ENCODE measurements at regions of chr10 and their contacts with region 1.

Region 1: GRCh38 chr10:110746254-110746826 is 102.2 kb downstream of the RBM20 start:
- DNase-seq: peak; percentile 19
- H3K4me3 Mint-ChIP-seq: no peak overlapping the region
- H3K27ac Mint-ChIP-seq: no peak overlapping the region
- H3K4me1 Mint-ChIP-seq: peaks cover 55% of the 10 kb centered on the region
- H3K27me3 Mint-ChIP-seq: no peaks in the 10 kb centered on the region

Region 2: DNA sequence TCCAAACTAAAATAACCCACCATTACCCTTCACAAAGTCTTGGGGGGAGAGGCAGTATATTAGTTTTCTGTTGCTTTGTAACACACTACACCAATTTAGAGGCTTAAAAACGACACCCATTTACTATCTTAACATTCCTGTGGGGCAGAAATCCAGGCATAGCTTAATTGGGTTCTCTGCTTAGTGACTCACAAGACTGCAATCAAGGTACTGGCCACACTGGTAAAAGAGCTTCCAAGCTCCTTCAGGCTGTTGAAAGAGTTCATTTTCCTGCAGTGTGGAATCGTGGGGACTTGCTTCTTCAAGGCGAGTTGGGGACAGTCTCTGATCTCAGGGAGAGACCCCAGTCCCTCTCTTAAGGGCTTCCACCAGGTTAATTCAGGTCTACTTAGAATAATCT is 962.1 kb before region 1 on chr10:
- intact Hi-C with region 1: no loop called
- DNase-seq: no peak
- H3K4me3 Mint-ChIP-seq: no peak overlapping the region
- H3K27ac Mint-ChIP-seq: no peak overlapping the region
- H3K4me1 Mint-ChIP-seq: no peaks in the 10 kb centered on the region
- H3K27me3 Mint-ChIP-seq: peaks cover 3% of the 10 kb centered on the region

Region 3: DNA sequence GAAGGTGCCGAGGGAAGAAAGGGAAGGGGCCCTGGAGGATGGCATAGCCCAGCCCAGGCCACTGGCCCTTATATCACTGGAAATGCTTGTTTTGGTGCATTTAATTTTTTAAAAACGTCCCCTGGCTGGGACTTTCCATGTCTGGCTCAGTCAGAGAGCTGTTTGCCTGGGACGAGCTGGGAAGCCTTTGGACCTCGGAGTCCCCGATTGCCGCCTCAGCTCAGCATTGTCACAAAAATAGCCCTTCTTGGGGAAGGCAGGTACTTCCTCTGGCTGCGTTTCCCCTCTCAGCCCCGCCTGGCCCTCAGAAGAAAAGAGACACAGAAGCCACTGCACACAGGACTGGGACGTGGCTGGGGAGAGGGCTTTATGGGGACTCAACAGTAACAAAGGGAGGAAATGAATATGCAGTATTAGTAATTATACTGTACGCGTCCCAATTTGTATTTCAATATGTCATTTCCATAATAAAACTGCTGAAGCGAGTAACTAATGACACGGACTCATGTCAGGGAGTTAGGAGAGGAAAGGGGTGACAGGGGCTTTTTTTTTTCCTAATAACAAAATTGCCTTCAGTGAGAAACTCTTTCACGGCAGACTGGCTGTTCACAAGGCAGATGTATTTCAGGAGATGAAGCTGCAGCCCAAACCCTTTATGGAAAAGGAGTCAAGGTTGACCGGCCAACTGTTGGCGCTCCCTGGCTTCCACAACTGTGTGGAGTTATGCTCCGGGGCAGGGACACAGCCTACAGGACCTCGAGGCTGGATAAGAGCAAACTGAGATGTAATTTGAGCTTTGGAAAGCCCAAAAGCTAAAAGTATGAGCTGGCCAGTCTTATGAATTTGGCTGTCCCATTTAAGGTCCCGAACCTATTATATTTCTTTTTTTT is 570.0 kb before region 1 on chr10:
- intact Hi-C with region 1: no loop called
- DNase-seq: no peak
- H3K4me3 Mint-ChIP-seq: no peak overlapping the region
- H3K27ac Mint-ChIP-seq: no peak overlapping the region
- H3K4me1 Mint-ChIP-seq: peaks cover 6% of the 10 kb centered on the region
- H3K27me3 Mint-ChIP-seq: peaks cover 47% of the 10 kb centered on the region

Region 4: DNA sequence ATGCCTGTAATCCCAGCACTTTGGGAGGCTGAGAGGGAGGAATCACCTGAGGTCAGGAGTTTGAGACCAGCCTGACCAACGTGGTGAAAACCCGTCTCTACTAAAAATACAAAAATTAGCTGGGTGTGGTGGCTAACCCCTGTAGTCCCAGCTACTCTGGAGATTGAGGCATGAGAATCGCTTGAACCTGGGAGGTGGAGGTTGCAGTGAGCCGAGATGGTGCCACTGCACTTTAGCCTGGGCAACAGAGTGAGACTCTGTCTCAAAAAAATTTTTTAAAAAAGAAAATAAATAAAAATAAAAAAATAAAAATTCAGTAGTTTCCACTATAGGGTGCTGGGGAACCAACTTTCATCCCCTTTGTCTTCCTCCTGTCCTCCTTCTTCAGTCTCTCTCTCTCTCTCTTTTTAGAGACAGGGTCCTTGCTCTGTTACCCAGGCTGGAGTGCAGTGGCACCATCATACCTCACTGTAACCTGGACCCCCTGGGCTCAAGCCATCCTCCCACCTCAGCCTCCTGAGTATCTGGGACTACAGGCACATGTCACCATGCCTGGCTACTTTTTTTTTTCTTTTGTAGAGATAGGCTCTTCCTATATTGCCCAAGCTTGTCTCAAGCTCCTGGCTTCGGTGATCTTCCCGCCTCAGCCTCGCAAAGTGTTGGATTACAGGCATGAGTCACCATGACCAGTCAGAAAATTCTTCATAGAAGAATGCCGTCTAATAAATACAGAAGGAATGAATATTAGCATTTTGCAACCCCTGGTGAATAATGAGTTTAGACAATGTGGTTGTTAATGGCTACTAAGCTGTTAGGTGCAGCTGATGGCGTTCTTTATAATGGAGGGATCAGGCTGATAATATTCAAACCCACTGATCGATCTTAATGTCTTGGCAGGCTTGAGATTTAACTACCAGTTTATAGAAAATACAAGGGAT is 81.6 kb before region 1 on chr10:
- intact Hi-C with region 1: no loop called
- DNase-seq: no peak
- H3K4me3 Mint-ChIP-seq: no peak overlapping the region
- H3K27ac Mint-ChIP-seq: no peak overlapping the region
- H3K4me1 Mint-ChIP-seq: peaks cover 11% of the 10 kb centered on the region
- H3K27me3 Mint-ChIP-seq: peaks cover 32% of the 10 kb centered on the region

Region 5: DNA sequence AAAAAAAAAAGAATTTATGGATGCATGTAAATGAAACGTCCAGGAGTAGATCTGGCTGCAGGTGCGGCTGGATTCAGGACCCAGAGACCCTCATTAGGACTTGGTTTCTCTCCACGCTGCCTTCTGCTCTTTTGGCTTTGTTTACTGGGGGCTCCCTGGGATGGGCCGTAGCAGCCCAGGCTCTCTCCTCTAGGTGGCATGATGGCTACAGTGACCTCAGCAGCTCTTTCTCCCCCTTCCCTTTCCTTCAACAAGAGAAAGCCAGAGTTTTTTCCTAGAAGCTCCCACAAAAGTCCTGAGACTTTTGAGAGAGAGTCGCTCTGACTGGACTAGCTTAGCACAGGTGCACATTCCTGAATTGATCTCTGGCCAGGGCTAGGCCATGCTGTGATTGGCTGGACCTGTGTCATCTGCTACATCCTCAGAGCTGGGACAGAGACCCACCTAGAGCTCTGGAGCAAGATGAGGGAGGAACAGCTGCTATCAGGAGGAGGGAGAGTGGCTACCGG is 57.5 kb after region 1 on chr10:
- intact Hi-C with region 1: loop called (anchors 2 kb)
- DNase-seq: no peak
- H3K4me3 Mint-ChIP-seq: peak overlapping the region; percentile 56
- H3K27ac Mint-ChIP-seq: peak overlapping the region; percentile 51
- H3K4me1 Mint-ChIP-seq: peaks cover 41% of the 10 kb centered on the region
- H3K27me3 Mint-ChIP-seq: no peaks in the 10 kb centered on the region

Region 6: GRCh38 chr10:110871298-110872084 is 125.2 kb after region 1 on chr10 and contains the start of gene PDCD4:
- intact Hi-C with region 1: loop called (anchors 1 kb)
- DNase-seq: peak; percentile 94
- H3K4me3 Mint-ChIP-seq: peak within 1 kb of the TSS; percentile 96
- H3K27ac Mint-ChIP-seq: peak within 1 kb of the TSS; percentile 98
- H3K4me1 Mint-ChIP-seq: peaks cover 74% of the 10 kb centered on the region
- H3K27me3 Mint-ChIP-seq: no peaks in the 10 kb centered on the region
- total RNA-seq, gene PDCD4: 46.1 and 51.8 TPM in 2 replicates

Region 7: GRCh38 chr10:110893559-110894179 is 147.3 kb after region 1 on chr10:
- intact Hi-C with region 1: loop called (anchors 1 kb)
- DNase-seq: no peak
- H3K4me3 Mint-ChIP-seq: no peak overlapping the region
- H3K27ac Mint-ChIP-seq: no peak overlapping the region
- H3K4me1 Mint-ChIP-seq: peaks cover 6% of the 10 kb centered on the region
- H3K27me3 Mint-ChIP-seq: no peaks in the 10 kb centered on the region

Region 8: DNA sequence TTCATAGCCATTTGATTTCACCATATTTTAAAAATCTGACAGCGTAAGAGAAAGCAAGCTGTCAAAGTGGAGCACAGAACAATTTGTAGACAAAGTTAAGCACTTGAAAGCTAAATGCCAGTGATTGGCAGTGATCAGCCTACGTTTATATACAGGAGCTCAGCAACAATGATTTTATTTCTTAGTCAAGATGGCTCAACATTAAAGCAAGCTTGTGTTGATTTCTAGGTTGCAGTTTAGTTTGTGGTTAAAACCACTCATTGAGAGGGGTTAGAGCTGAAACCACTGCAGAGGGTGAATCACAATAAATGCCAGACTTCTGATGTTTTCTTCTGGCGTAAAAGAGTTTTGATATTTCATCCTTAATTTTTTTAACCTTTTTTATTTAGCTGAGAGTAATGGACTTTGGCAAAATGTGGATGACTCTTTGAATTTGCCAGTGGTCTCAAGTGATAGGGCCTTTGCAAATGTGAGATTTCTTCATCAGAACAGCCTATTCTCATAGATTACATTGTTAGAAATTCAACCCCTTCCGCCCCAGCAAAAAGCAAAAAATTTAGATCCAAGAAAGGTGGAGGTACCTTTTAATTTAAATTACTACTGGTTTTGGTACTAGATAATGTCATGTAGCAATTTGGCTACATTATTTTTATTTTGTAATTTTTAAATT is 246.8 kb after region 1 on chr10:
- intact Hi-C with region 1: loop called (anchors 10 kb)
- DNase-seq: peak; percentile 21
- H3K4me3 Mint-ChIP-seq: peak overlapping the region; percentile 63
- H3K27ac Mint-ChIP-seq: no peak overlapping the region
- H3K4me1 Mint-ChIP-seq: peaks cover 43% of the 10 kb centered on the region
- H3K27me3 Mint-ChIP-seq: no peaks in the 10 kb centered on the region

Region 9: GRCh38 chr10:111076191-111076681 is 329.9 kb after region 1 on chr10:
- intact Hi-C with region 1: loop called (anchors 10 kb)
- DNase-seq: peak; percentile 15
- H3K4me3 Mint-ChIP-seq: peak overlapping the region; percentile 19
- H3K27ac Mint-ChIP-seq: no peak overlapping the region
- H3K4me1 Mint-ChIP-seq: no peaks in the 10 kb centered on the region
- H3K27me3 Mint-ChIP-seq: peaks cover 58% of the 10 kb centered on the region

Region 10: DNA sequence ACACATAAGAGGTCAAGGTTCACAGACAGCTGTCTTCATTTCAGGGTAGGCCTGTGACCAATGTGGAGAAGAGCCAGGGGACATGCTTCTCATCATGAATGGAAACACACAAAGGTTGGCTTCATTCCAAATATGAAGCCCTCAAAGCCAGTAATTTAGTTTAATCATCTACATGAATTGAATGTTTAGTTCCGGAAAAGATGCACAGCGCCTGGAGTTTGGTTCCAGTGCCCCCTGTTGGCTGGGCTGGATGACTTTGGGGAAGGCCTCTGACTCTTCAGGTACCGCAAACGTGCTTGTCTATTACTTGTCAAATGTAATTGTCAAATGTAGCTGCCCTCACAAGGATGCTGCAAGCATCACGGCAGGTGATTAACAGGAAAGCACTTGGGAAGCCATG is 461.2 kb after region 1 on chr10:
- intact Hi-C with region 1: loop called (anchors 5 kb)
- DNase-seq: no peak
- H3K4me3 Mint-ChIP-seq: no peak overlapping the region
- H3K27ac Mint-ChIP-seq: no peak overlapping the region
- H3K4me1 Mint-ChIP-seq: no peaks in the 10 kb centered on the region
- H3K27me3 Mint-ChIP-seq: peaks cover 6% of the 10 kb centered on the region